Activated CD4-positive, alpha-beta T cell treated with anti-CD3 and anti-CD28 coated beads, Interleukin-2, amount 10 ng/mL, durations not matched to agents 24 days and 14 days (primary cell): ENCODE measurements at regions of chrX and their contacts with region 1.

Region 1: GRCh38 chrX:31658360-31658759 is 586.5 kb upstream of the FTHL17 start:
- DNase-seq: no peak
- H3K4me3 Mint-ChIP-seq: no peak overlapping the region
- H3K27ac Mint-ChIP-seq: no peak overlapping the region
- H3K4me1 Mint-ChIP-seq: no peaks in the 10 kb centered on the region
- H3K27me3 Mint-ChIP-seq: no peaks in the 10 kb centered on the region

Region 2: GRCh38 chrX:30735839-30736238 is 922.5 kb before region 1 on chrX:
- intact Hi-C with region 1: loop called (anchors 10 kb)
- DNase-seq: peak; percentile 92
- H3K4me3 Mint-ChIP-seq: no peak overlapping the region
- H3K27ac Mint-ChIP-seq: no peak overlapping the region
- H3K4me1 Mint-ChIP-seq: peaks cover 7% of the 10 kb centered on the region
- H3K27me3 Mint-ChIP-seq: no peaks in the 10 kb centered on the region

Region 3: DNA sequence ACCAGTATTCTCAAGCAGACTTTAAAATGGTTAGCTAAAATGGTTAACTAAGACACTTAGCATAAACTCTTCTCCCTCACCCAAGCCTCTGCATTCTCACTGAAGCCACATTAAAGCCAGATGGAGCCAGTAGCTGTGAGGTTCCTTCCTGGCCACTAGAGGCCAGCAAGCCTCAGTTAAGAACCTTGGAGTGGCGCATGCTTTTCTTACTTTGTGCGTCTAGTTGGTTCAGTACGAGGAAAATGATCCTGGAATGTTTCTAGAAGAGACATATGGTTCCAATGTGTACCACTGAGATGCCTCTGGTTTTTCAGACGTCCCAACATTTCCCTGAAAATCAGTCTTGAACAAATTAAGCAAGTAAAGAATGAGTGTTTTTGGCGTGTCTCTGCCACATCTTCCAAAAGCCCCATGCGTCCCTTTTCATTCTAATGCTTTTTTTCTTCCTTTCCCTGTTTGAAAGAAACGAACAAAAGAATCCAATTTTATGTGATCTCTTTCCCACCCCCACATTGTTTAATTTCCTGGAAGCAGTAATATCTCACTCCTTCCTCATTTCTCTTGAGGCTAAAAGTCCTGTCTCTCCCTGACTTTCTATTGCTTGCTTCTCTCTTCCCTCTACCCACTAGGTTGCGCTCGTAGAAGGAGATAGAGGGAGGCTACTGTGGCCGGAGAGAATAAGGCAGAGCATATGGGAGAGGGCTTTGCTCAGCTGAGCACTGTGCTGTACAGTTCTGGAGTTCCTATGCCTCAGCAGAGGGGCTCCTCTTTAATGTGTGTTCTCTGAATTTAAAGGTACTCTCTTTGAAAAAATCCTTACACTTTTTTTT is 686.4 kb before region 1 on chrX:
- intact Hi-C with region 1: loop called (anchors 5 kb)
- DNase-seq: peak; percentile 72
- H3K4me3 Mint-ChIP-seq: peak overlapping the region; percentile 80
- H3K27ac Mint-ChIP-seq: peak overlapping the region; percentile 45
- H3K4me1 Mint-ChIP-seq: peaks cover 15% of the 10 kb centered on the region
- H3K27me3 Mint-ChIP-seq: peaks cover 8% of the 10 kb centered on the region

Region 4: GRCh38 chrX:31021537-31021936 is 636.8 kb before region 1 on chrX:
- intact Hi-C with region 1: no loop called
- DNase-seq: no peak
- H3K4me3 Mint-ChIP-seq: no peak overlapping the region
- H3K27ac Mint-ChIP-seq: no peak overlapping the region
- H3K4me1 Mint-ChIP-seq: no peaks in the 10 kb centered on the region
- H3K27me3 Mint-ChIP-seq: peaks cover 3% of the 10 kb centered on the region

Region 5: DNA sequence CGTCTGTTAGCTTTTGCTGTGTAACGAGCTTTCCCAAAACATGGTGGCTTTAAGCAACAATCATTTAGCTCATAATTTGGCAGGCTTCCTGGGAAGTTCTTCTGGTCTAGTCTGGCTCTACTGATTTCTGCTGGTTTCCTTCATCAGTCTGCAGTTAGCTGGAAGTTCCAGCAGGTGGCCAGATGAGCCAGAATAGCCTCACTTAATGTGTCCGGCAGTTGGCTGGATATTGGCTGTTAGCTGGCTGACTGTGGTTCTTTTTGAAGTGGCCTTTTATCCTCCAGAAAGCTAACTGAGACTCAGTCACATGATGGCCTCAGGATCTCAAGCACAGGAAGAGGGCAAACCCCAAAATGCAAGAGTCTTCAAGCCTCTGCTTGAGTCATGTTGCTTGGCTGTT is 621.5 kb before region 1 on chrX:
- intact Hi-C with region 1: loop called (anchors 2 kb)
- DNase-seq: peak; percentile 61
- H3K4me3 Mint-ChIP-seq: no peak overlapping the region
- H3K27ac Mint-ChIP-seq: no peak overlapping the region
- H3K4me1 Mint-ChIP-seq: peaks cover 7% of the 10 kb centered on the region
- H3K27me3 Mint-ChIP-seq: no peaks in the 10 kb centered on the region

Region 6: GRCh38 chrX:31213941-31214340 is 444.4 kb before region 1 on chrX:
- intact Hi-C with region 1: loop called (anchors 10 kb)
- DNase-seq: peak; percentile 53
- H3K4me3 Mint-ChIP-seq: no peak overlapping the region
- H3K27ac Mint-ChIP-seq: no peak overlapping the region
- H3K4me1 Mint-ChIP-seq: peaks cover 3% of the 10 kb centered on the region
- H3K27me3 Mint-ChIP-seq: no peaks in the 10 kb centered on the region

Region 7: GRCh38 chrX:32084757-32085156 is 426.4 kb after region 1 on chrX:
- intact Hi-C with region 1: no loop called
- DNase-seq: no peak
- H3K4me3 Mint-ChIP-seq: no peak overlapping the region
- H3K27ac Mint-ChIP-seq: no peak overlapping the region
- H3K4me1 Mint-ChIP-seq: no peaks in the 10 kb centered on the region
- H3K27me3 Mint-ChIP-seq: no peaks in the 10 kb centered on the region